Lower leg skin (tissue), 4 donors: ENCODE measurements at regions of chr11 and their contacts with region 1.

Region 1: GRCh38 chr11:101436511-101437142 is 147.2 kb downstream of the TRPC6 start:
- DNase-seq: no peak
- H3K4me3 ChIP-seq: no peak overlapping the region
- CTCF ChIP-seq: no peak
- POLR2A ChIP-seq: no peak

Region 2: GRCh38 chr11:101848262-101848661 is 411.6 kb after region 1 on chr11:
- intact Hi-C with region 1: loop called (anchors 10 kb)
- DNase-seq: no peak
- H3K4me3 ChIP-seq: no peak overlapping the region
- CTCF ChIP-seq: no peak
- POLR2A ChIP-seq: no peak